Left cardiac atrium (tissue), 4 donors: ENCODE measurements at regions of chr1 and their contacts with region 1.

Region 1: GRCh38 chr1:118716782-118717181 is 271.4 kb downstream of the TBX15 start:
- DNase-seq: no peak
- ATAC-seq: no peak

Region 2: DNA sequence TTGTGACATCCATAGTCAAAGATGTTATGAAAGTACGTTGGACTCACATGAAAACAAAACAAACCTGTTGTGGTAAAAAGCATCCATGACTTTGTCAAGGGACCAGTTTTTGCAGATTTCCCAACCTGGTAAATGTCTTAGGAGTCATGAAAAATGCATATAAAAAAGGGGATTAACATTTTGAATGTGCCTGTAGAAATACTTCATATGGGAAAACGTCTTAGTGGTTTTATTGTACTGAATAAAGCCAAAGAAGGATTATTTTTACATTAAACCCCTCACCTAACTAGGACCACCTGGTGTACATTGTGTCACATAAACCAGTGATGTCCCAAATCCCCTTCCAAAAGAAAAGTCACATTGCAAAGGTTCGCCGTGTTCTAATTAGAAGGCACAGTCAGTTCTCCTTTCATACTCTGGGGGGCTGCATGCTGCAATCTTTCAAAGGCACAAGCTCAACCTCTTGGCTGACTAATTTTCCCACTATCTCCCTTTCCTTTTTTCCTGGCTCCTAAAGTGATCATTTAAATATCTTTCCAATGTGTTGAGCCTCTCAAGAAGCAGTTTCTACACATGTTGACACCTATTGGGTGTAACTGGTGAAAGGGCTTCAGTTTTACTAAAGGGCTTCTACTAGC is 411.9 kb before region 1 on chr1:
- intact Hi-C with region 1: loop called in 1 of 2 experiments (anchors 10 kb)
- DNase-seq: no peak
- ATAC-seq: peak; percentile 61 to 78

Region 3: GRCh38 chr1:118661769-118662317 is 54.9 kb before region 1 on chr1:
- intact Hi-C with region 1: no loop called
- DNase-seq: no peak
- ATAC-seq: no peak